Activated CD4-positive, alpha-beta T cell treated with anti-CD3 and anti-CD28 coated beads, Interleukin-2, amount 10 ng/mL, durations not matched to agents 24 days and 14 days (primary cell): ENCODE measurements at regions of chr7 and their contacts with region 1.

Region 1: GRCh38 chr7:101815835-101816493 is 1.5 kb upstream of the CUX1 start:
- DNase-seq: peak; percentile 91
- H3K4me3 Mint-ChIP-seq: peak overlapping the region; percentile 82
- H3K27ac Mint-ChIP-seq: peak overlapping the region; percentile 78
- H3K4me1 Mint-ChIP-seq: peaks cover 17% of the 10 kb centered on the region
- H3K27me3 Mint-ChIP-seq: peaks cover 39% of the 10 kb centered on the region

Region 2: GRCh38 chr7:101321491-101322401 is 494.2 kb before region 1 on chr7 and contains the start of gene IFT22:
- intact Hi-C with region 1: loop called (anchors 10 kb)
- DNase-seq: peak; percentile 96
- H3K4me3 Mint-ChIP-seq: peak within 1 kb of the TSS; percentile 91
- H3K27ac Mint-ChIP-seq: peak within 1 kb of the TSS; percentile 86
- H3K4me1 Mint-ChIP-seq: peaks cover 11% of the 10 kb centered on the region
- H3K27me3 Mint-ChIP-seq: peaks cover 7% of the 10 kb centered on the region
- total RNA-seq, gene IFT22: 5.9 and 6.6 TPM in 2 replicates

Region 3: GRCh38 chr7:101688183-101688831 is 127.7 kb before region 1 on chr7:
- intact Hi-C with region 1: loop called (anchors 1 kb)
- DNase-seq: peak; percentile 95
- H3K4me3 Mint-ChIP-seq: no peak overlapping the region
- H3K27ac Mint-ChIP-seq: no peak overlapping the region
- H3K4me1 Mint-ChIP-seq: peaks cover 5% of the 10 kb centered on the region
- H3K27me3 Mint-ChIP-seq: peaks cover 2% of the 10 kb centered on the region

Region 4: DNA sequence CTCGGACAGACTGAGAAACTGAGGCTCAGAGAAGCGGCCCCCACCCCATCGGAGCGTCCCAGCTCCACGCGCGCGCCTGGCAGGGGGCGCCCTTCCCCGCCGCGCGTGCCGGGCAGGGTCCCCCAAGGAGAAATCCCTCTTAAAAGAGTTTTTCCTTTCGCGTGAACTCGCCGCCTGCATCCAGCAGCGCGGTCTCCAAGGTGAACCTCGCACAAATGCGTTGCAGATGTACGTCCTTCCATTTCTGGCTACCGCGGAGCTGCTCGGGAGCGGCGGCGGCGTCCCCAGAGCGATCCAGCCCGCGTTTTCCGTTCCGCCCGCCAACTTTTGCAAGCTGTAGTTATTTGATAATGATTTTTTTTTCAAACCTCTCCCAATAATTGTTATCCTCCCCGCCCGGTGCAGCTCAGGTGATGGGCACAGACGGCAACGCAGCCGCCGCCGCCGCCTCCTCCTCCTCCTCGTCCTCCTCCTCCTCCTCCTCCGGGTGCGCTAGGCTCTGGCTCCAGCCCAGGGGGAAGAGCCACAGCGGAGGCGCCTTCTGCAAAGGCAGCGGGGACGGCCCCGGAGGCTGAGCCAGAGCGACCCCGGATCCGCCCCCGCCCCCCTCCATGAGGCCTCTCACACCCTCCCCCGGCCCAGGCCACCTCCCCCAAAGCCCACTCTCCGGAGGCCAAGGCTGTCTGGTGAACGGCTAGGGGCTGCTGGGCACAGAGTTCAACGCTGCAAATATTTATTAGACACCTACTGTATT is 72.5 kb before region 1 on chr7:
- intact Hi-C with region 1: loop called (anchors 1 kb)
- DNase-seq: peak; percentile 92
- H3K4me3 Mint-ChIP-seq: peak overlapping the region; percentile 83
- H3K27ac Mint-ChIP-seq: no peak overlapping the region
- H3K4me1 Mint-ChIP-seq: peaks cover 40% of the 10 kb centered on the region
- H3K27me3 Mint-ChIP-seq: no peaks in the 10 kb centered on the region

Region 5: GRCh38 chr7:101754424-101755159 is 61.4 kb before region 1 on chr7:
- intact Hi-C with region 1: loop called (anchors 2 kb)
- DNase-seq: peak; percentile 65
- H3K4me3 Mint-ChIP-seq: peak overlapping the region; percentile 87
- H3K27ac Mint-ChIP-seq: peak overlapping the region; percentile 84
- H3K4me1 Mint-ChIP-seq: peaks cover 18% of the 10 kb centered on the region
- H3K27me3 Mint-ChIP-seq: no peaks in the 10 kb centered on the region

Region 6: GRCh38 chr7:101856473-101857357 is 40.8 kb after region 1 on chr7:
- intact Hi-C with region 1: loop called (anchors 1 kb)
- DNase-seq: peak; percentile 93
- H3K4me3 Mint-ChIP-seq: peak overlapping the region; percentile 90
- H3K27ac Mint-ChIP-seq: peak overlapping the region; percentile 97
- H3K4me1 Mint-ChIP-seq: peaks cover 28% of the 10 kb centered on the region
- H3K27me3 Mint-ChIP-seq: no peaks in the 10 kb centered on the region

Region 7: GRCh38 chr7:102279537-102280400 is 463.8 kb after region 1 on chr7:
- intact Hi-C with region 1: loop called (anchors 10 kb)
- DNase-seq: peak; percentile 85
- H3K4me3 Mint-ChIP-seq: no peak overlapping the region
- H3K27ac Mint-ChIP-seq: no peak overlapping the region
- H3K4me1 Mint-ChIP-seq: peaks cover 7% of the 10 kb centered on the region
- H3K27me3 Mint-ChIP-seq: peaks cover 6% of the 10 kb centered on the region